PC-9 (cell line): ENCODE measurements at regions of chr5 and their contacts with region 1.

Region 1: GRCh38 chr5:95846554-95847260 is 24.2 kb upstream of the GLRX start:
- DNase-seq: peak; percentile 48 to 55
- H3K4me3 ChIP-seq: no peak overlapping the region
- H3K27ac ChIP-seq: no peak overlapping the region
- H3K4me1 ChIP-seq: peaks cover 25% of the 10 kb centered on the region
- H3K27me3 ChIP-seq: no peaks in the 10 kb centered on the region
- CTCF ChIP-seq: peak; percentile 95

Region 2: DNA sequence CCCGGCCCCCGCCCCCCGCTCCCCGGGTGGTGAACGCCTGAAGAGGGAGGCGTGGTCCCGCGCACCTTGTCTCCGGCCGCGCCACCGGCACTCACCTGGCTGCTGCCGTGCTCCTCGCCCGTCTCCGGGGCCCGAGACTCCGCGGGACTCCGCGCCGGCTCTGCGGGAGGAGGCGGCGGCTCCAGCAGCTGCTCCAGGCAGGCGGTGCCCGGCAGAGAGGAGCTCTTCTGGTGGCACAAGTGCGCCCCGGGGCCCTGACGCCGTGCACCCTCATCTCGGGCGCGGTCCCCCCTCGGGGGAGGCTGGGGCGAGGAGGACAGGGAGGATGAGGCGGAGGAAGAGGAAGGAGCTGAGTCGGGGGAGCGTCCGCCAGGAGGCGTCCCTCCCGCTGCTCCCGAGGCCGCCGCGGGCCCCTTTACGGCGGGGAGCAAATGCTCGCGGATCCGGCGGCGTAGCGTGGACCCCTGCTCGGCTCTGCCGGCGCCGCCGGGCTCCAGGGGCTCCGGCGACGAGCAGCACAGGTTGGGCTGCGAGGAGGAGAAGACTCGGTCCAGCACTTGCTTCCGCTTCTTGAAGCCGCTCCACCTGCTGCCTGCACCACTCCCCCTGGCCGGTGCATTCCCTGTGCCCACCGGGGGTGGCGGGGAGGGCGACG is 562.8 kb before region 1 on chr5:
- CTCF ChIA-PET with region 1: interaction called, 3 read pairs
- POLR2A ChIA-PET with region 1: no interaction called
- intact Hi-C with region 1: loop called (anchors 10 kb)
- DNase-seq: peak in 1 of 2 experiments; percentile 70
- H3K4me3 ChIP-seq: peak overlapping the region; percentile 95
- H3K27ac ChIP-seq: no peak overlapping the region
- H3K4me1 ChIP-seq: peaks cover 13% of the 10 kb centered on the region; the same call in 1 of the 2 replicates
- H3K27me3 ChIP-seq: peaks cover 17% of the 10 kb centered on the region
- CTCF ChIP-seq: peak; percentile 66

Region 3: DNA sequence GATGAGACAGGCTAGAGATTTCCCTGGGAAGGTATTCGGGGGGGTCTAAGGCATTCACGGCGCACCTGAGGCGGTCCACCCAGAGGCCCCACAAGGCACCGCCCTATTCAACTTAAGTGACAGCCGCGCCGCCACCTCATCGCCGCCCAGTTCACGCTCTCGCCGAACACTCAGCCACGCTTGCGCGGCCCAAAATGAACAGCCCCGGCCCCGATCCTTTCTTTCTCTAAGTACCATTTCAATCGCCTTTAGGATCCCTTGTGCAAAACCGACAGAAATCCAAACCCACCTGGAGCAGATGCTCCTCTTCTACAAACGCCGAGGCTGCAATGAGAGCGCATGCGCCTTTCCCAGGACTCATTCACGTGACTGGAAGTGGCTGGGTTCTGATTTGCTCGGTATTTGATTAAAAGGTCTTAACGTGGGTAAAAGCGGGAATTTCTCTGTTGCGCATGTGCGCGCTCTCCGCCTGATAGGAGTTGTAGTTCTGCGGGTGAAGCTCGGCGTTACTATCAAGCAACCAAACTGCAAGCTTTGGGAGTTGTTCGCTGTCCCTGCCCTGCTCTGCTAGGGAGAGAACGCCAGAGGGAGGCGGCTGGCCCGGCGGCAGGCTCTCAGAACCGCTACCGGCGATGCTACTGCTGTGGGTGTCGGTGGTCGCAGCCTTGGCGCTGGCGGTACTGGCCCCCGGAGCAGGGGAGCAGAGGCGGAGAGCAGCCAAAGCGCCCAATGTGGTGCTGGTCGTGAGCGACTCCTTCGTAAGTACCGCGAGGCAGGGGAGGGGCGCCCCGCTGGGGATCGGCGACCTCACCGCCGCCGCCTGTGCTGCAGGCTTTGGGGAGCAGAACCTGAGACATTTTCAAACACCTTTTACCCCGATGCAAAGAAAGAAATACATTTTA is 291.8 kb before region 1 on chr5 and contains the starts of genes ARSK and SKIC3:
- CTCF ChIA-PET with region 1: no interaction called
- POLR2A ChIA-PET with region 1: no interaction called
- intact Hi-C with region 1: loop called (anchors 5 kb)
- DNase-seq: peak; percentile 92 to 96
- H3K4me3 ChIP-seq: peak within 1 kb of the TSS; percentile 71
- H3K27ac ChIP-seq: peak within 1 kb of the TSS; percentile 84
- H3K4me1 ChIP-seq: peaks cover 16% of the 10 kb centered on the region
- H3K27me3 ChIP-seq: no peaks in the 10 kb centered on the region
- CTCF ChIP-seq: no peak; the same call in 1 of the 2 replicates
- total RNA-seq, gene ARSK: 5.2 and 5.8 TPM in 2 replicates
- total RNA-seq, gene SKIC3: 43.7 and 50.7 TPM in 2 replicates

Region 4: GRCh38 chr5:95664204-95664786 is 182.4 kb before region 1 on chr5:
- CTCF ChIA-PET with region 1: no interaction called
- POLR2A ChIA-PET with region 1: interaction called, 9 read pairs
- intact Hi-C with region 1: loop called (anchors 1 kb)
- DNase-seq: peak in 1 of 2 experiments; percentile 7
- H3K4me3 ChIP-seq: no peak overlapping the region
- H3K27ac ChIP-seq: no peak overlapping the region
- H3K4me1 ChIP-seq: 0 out of 2 replicates have a peak, but pooled peaks cover 10% of the 10 kb centered on the region
- H3K27me3 ChIP-seq: no peaks in the 10 kb centered on the region
- CTCF ChIP-seq: peak; percentile 90

Region 5: GRCh38 chr5:95781101-95781583 is 65.6 kb before region 1 on chr5:
- CTCF ChIA-PET with region 1: interaction called, 20 read pairs
- POLR2A ChIA-PET with region 1: no interaction called
- intact Hi-C with region 1: loop called (anchors 1 kb)
- DNase-seq: peak; percentile 68 to 69
- H3K4me3 ChIP-seq: no peak overlapping the region
- H3K27ac ChIP-seq: no peak overlapping the region
- H3K4me1 ChIP-seq: no peaks in the 10 kb centered on the region
- H3K27me3 ChIP-seq: no peaks in the 10 kb centered on the region
- CTCF ChIP-seq: peak; percentile 97

Region 6: DNA sequence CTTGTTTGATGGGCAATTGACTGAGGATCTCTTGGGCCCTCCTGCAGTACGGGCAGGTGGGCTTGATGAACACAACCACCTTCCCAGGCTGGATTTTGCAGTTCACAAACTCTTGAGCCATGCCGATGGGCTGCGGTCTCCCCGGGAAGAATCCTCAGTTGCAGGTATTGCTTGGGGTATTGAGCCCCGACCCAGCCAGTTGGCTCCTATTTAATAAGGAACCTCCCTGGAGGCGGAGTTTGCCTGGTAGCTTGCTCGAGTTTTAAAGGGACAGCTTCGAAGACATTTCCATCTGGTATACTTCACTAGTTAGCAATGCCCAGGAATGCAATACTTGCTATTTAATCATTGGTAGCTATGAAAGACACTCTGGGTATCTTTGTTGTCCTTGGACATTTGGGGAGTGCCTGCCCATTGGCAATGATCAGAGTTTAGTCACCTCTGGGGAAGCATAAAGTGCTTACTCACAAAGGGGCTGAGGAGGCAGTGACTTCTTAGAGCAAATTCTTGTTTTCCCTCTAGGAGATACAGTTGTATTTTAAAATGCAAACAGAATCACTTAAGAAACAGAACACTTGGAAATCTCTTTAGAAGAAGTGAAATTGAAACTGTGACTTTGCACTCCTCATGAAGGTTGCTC is 24.0 kb before region 1 on chr5 and contains the start of gene GLRX:
- CTCF ChIA-PET with region 1: interaction called, 3 read pairs
- POLR2A ChIA-PET with region 1: interaction called, 9 read pairs
- intact Hi-C with region 1: loop called (anchors 1 kb)
- DNase-seq: peak; percentile 66 to 95
- H3K4me3 ChIP-seq: peak within 1 kb of the TSS; percentile 79
- H3K27ac ChIP-seq: peak within 1 kb of the TSS; percentile 98
- H3K4me1 ChIP-seq: peaks cover 32% of the 10 kb centered on the region
- H3K27me3 ChIP-seq: no peaks in the 10 kb centered on the region
- CTCF ChIP-seq: no peak
- total RNA-seq, gene GLRX: 23.0 and 25.5 TPM in 2 replicates

Region 7: GRCh38 chr5:95835682-95836385 is 10.9 kb before region 1 on chr5:
- CTCF ChIA-PET with region 1: interaction called, 3 read pairs
- POLR2A ChIA-PET with region 1: interaction called, 3 read pairs
- intact Hi-C with region 1: loop called (anchors 1 kb)
- DNase-seq: no peak
- H3K4me3 ChIP-seq: peak overlapping the region; percentile 80; the same call in 1 of the 2 replicates
- H3K27ac ChIP-seq: peak overlapping the region; percentile 54
- H3K4me1 ChIP-seq: peaks cover 42% of the 10 kb centered on the region
- H3K27me3 ChIP-seq: no peaks in the 10 kb centered on the region
- CTCF ChIP-seq: no peak

Region 8: DNA sequence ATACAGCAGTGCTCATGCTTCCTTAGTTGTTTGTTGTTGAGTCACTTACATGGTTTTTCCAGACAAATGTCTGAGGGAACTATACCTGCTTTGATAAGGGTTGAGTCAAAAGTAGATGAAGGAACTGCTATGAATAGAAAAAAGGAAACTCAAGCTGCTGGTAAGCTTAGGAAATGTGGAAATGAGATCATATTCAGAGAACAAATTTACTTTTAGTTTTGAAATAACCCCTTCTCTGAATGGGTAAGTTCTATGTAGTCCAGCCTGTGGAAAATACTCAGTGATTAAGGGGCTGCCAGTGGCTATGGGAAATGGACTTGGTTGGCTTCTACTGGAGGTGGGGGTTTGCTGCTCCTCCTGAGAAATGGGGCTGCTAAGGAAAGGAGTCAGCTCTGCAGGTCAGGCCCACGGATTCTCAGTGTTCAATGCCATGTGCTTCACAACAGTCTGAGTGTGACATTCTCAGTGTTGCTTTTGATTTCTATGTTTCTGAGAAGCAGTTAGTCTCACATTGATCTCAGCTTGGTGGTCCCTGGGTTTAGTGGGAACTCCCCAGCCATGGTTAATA is 23.5 kb after region 1 on chr5:
- CTCF ChIA-PET with region 1: no interaction called
- POLR2A ChIA-PET with region 1: no interaction called
- intact Hi-C with region 1: no loop called
- DNase-seq: peak in 1 of 2 experiments; percentile 49
- H3K4me3 ChIP-seq: no peak overlapping the region
- H3K27ac ChIP-seq: 0 out of 2 replicates have a peak overlapping the region, but pooled peaks have one; percentile 36
- H3K4me1 ChIP-seq: no peaks in the 10 kb centered on the region
- H3K27me3 ChIP-seq: no peaks in the 10 kb centered on the region
- CTCF ChIP-seq: no peak